Posterior vena cava (tissue), 2 donors: ENCODE measurements at regions of chr5 and their contacts with region 1.

Region 1: DNA sequence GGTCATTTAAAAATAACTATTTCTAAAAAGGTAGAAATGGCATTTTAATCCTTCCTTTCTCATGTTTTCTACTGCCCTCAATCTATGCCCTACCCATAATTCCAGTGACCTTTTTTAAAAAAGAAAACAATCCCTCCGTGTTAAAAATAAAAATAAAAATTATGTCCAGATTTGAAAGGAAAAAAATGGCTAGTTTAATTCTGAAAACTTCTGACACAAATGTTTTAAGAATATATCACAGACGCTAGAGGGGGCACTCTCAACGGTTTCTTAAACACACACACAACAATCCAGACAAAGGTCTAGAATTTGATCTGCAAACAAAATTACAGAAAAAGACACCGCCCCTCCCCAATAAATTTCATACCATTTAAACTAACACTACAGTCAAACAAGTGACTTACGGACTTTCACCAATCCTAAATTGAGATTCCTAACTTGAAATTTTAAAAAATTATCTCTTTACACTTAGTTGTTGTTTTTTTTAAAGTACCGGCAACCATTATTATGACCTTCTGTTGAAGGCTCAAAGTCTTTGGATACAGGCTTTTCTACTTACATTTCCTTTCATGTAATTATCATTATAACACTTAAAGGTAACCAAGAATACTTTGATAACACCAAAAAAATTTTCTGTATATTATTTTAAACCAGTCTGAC is 38.2 kb downstream of the CLINT1 start:
- DNase-seq: no peak

Region 2: GRCh38 chr5:157994906-157995519 is 174.3 kb after region 1 on chr5:
- intact Hi-C with region 1: loop called (anchors 5 to 10 kb)
- DNase-seq: peak; percentile 82

Region 3: GRCh38 chr5:159120446-159120845 is 1299.7 kb after region 1 on chr5:
- intact Hi-C with region 1: loop called in 1 of 2 experiments (anchors 10 kb)
- DNase-seq: no peak

Region 4: GRCh38 chr5:159133041-159133741 is 1312.5 kb after region 1 on chr5:
- intact Hi-C with region 1: loop called (anchors 10 kb)
- DNase-seq: no peak